Head of caudate nucleus (tissue), 42 donors: ENCODE measurements at regions of chr1 and their contacts with region 1.

Region 1: DNA sequence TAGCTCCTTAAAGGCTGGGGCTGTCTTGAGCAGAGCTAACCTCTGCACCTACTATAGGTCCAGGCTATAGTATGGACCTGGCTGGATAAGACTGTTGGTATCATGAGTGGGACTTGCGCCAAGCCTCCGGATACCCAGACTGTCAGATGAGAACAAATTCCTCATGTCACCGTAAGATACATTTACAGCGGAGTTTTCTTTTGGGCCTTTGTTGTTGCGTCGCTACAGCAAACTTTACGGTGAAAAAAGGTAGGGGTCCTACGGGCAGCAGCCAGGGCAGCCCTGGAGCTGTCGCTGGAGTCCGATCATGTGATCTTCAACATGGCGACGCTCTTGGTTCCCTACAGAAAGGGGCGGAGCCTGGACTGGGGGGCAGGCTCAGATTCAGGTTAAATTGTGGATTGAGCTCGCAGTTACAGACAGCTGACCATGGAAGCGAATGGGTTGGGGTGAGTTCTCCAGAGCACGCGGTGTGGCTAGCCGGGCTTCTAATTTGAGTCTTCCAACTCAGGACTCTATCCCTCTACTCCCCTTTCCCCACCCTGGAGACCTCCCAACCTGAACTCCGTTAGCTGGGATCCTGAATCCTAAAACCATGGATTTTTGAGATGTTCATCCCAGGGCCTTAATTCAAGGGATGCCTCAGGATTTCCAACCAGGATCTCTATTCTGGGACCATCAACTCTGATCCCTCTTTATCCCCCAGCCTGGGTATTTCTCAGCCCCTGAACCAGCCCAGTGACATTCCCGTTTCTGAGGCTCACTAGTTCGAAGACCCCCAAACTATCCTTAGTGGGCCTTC is at the start of gene UROD:
- DNase-seq: peak; percentile 86 to 98 (median 94)

Region 2: DNA sequence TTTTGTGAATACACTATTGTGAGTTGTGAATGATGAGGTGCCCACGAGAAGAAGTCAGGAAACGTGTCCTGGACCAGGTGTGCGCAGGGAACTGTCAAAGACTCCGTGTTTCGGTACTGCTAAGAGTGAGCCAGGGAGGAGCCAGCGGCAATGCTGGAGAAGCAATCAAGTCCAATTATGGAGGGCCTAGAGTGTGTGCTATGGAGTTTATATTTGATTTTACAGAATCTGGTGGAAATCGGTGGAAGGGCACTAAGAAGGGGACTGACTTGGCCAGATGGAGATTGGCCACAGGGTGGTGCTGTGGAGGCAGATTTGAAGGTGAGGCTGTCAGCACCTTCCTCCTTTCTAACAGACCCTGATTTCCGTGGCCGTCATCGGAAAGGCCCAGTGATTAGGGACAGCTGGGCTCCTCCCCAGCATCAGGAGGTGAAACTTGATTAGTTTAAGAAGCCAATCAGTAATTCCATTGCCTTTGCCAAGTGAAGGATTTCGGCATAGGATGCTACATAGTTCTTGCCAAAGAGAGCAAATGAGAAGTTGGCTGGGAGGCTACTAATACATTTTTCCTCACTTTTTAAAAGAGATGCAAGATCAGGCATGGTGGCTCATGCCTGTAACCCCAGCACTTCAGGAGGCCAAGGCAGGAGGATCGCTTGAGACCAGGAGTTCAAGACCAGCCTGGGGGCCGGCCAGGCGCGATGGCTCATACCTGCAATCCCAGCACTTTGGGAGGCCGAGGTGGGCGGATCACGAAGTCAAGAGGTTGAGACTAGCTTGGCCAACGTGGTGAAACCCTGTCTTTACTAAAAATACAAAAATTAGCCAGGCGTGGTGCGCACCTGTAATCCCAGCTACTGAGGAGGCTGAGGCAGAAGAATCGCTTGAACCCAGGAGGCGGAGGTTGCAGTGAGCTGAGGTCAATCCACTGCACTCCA is 176.0 kb before region 1 on chr1:
- intact Hi-C with region 1: loop called (anchors 10 kb)
- DNase-seq: peak; percentile 68 to 94 (median 88)

Region 3: GRCh38 chr1:45205910-45206721 is 194.1 kb after region 1 on chr1 and contains the start of gene ZSWIM5:
- intact Hi-C with region 1: loop called (anchors 10 kb)
- DNase-seq: peak; percentile 12 to 90 (median 80)

Region 4: DNA sequence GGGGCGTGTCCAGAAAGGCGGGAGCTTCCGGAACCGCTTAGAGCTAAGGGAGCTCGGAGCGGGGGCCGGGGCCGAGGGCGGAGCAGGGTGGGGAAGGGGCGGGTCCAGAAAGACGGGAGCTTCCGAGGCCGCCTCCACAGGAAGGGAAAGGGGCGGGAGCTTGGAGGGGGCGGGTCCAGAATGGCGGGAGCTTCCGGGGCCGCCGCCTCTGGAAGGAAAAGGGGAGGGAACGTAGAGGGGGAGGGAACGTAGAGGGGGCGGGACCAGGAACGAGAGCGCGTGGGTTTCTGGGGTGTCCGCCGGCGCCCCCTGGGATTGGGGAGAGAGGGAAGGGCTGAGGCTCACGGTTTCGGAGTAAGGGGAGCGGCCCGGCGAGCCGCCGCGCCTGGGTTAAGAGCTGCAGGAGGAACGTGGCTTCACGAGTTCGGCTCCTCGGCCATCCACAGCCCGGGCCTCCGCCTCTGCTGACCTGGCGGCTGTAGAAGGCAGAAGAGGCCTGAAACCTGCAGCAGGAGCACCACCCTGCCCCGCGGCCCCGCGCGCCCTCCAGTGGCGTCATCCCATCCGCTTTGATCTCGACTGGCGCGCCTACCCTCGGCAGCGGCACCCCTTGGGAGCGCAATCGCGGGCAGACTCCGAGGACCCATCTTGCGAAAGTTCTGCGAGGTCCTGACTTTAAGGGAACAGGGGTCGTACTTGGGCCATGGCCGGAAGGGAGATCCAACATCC is 291.7 kb after region 1 on chr1:
- intact Hi-C with region 1: loop called (anchors 2 kb)
- DNase-seq: peak; percentile 93 to 100 (median 98)

Region 5: GRCh38 chr1:45490626-45491486 is 478.8 kb after region 1 on chr1 and contains the start of gene TESK2:
- intact Hi-C with region 1: loop called (anchors 5 kb)
- DNase-seq: peak; percentile 96 to 100 (median 99)